ENCODE measurements at regions of chr3 and their contacts with region 1.

Region 1: DNA sequence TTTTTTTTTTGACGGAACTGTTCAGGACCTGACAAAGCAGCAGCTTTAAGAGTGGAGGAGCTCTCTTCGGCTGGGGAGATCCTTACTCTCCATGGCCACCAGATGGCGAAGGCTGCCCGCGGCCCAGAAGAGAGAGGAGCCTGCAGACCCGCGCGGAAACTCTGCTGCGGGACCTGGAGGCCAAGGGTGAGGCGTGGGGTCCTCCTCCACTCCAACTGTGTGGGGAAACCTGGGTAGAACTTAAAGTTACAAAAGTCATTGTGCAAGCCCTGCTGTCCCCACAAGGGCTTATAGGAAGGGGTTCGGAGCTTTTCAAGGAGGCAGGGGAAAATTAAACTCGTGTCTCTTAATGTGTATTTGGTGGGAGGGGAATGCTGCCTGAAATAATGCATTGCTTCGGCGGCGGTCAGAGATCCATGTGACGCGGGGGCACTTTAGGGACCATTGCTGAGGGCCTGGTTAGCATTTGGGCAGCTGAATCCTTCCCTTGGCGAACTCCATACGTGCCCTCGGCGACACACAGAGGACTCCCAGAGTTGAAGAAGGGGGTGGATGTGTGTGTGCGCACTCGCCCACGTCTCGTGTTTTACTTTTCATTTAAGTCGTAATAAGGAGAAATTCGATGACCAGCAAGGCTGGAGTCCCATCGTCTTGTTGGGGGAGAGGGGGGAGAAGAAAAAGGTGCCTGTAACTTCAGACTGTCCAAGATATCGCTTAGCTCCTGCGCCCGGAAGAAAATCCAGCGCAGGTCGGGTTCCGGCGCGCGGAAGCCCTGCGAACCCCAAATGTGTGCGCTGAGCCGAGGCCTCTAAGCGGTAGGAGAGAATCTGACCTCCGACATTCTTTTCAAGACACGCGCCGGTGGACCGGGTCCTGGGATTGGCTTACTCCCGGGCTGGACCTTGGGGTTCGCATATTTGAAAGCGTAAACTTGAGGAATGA is 9.7 kb downstream of the EOMES start:
- DNase-seq: peak; percentile 87
- ATAC-seq: peak; percentile 93
- H3K4me3 Mint-ChIP-seq: peak overlapping the region; percentile 88
- H3K27ac Mint-ChIP-seq: peak overlapping the region; percentile 70
- H3K4me1 Mint-ChIP-seq: peaks cover 27% of the 10 kb centered on the region
- H3K27me3 Mint-ChIP-seq: peaks cover 46% of the 10 kb centered on the region

Region 2: DNA sequence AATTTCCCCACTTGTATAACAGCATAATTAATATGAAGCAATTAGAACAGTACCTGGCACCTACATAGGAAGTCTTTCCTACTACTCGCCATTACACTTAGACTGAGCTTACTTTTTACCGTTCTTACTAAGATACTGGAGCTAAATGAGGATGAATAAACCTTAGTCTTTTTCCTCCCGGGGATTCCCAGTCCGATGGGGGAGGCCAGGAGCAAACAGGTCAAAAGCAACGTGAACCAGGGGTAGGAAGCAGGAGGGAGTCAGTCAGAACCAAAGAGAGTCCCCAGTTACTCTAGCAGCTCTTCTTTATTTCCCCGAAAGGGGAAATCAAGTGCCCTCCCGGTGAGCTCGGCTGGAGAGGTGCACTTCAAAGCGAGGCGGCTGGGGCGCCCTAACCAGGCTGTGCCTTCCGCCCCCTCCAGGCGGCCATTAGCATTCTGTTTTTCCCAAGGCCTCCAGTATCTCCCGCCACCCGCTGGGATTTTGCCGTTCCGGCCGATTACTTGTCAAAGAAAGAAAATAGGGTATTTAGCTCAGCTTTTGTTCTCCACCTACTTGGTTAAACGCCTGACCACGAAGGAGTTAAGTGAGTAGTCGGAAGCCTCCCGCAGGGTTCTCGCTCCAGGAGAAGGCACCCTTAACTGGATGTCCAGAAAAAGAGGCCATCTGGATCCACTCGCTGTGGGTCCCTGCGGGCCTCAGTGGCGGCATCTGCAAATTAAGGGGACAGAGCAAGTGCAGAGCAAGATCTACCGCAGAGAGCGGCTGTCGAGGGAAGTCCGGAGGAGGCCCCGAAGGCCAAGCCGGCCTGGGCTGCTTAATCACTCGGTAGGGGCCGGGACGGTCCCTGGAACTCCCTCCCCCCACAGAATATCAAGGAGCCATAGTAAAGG is 16.0 kb after region 1 on chr3:
- CTCF ChIA-PET with region 1: interaction called, 57 read pairs
- POLR2A ChIA-PET with region 1: no interaction called
- DNase-seq: peak; percentile 44
- ATAC-seq: peak; percentile 59
- H3K4me3 Mint-ChIP-seq: peak overlapping the region; percentile 58
- H3K27ac Mint-ChIP-seq: no peak overlapping the region
- H3K4me1 Mint-ChIP-seq: peaks cover 45% of the 10 kb centered on the region
- H3K27me3 Mint-ChIP-seq: peaks cover 87% of the 10 kb centered on the region

Region 3: GRCh38 chr3:28317438-28318022 is 605.1 kb after region 1 on chr3:
- CTCF ChIA-PET with region 1: interaction called, 21 read pairs
- POLR2A ChIA-PET with region 1: no interaction called
- DNase-seq: peak; percentile 62
- ATAC-seq: peak; percentile 87
- H3K4me3 Mint-ChIP-seq: no peak overlapping the region
- H3K27ac Mint-ChIP-seq: no peak overlapping the region
- H3K4me1 Mint-ChIP-seq: peaks cover 14% of the 10 kb centered on the region
- H3K27me3 Mint-ChIP-seq: no peaks in the 10 kb centered on the region

Region 4: GRCh38 chr3:28334552-28334951 is 622.1 kb after region 1 on chr3:
- CTCF ChIA-PET with region 1: interaction called, 66 read pairs
- POLR2A ChIA-PET with region 1: no interaction called
- DNase-seq: no peak
- ATAC-seq: no peak
- H3K4me3 Mint-ChIP-seq: no peak overlapping the region
- H3K27ac Mint-ChIP-seq: no peak overlapping the region
- H3K4me1 Mint-ChIP-seq: peaks cover 14% of the 10 kb centered on the region
- H3K27me3 Mint-ChIP-seq: no peaks in the 10 kb centered on the region

Region 5: DNA sequence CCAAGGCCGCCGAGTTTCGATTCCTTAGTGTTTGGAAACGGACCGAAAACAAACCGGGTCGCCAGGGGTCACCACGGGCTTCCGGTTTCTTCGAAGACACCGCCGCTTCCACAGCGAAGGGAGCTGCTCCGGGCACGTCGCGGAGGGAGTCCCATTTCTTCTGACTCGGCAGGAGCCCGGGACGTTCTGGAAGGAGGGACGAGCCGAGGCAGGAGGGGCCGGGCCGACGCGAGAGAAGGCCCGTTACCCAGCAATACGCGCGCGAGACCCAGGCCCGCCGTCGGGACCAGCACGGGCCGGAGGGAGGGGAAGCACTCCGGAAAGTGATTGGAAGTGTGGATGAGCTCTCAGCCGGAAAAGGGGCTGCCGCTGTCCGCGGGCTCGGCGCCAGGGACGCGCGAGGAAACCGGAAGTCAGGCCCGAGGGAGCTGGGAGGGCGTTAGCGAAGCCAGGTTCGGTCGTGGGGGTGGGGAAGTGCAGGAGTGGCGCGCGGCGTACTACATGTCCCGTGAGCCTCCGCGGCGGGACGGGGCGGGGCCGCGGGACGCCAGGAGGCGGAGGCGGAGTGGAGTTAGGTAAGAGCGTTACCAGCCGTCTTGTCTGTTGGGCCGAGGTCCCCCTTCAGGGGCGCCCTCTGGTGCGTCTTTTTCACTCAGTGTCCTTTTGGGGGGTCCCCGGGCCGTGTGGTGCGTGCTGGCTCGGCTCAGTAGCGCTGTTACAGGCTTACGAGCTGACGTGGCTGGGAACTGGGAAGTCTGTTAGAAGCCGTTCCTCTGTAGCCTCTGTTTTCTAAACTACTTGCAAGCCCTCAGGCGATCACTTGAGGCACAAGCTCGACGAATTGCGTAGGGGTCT is 636.4 kb after region 1 on chr3 and contains the starts of genes AZI2 and ZCWPW2:
- CTCF ChIA-PET with region 1: interaction called, 14 read pairs
- POLR2A ChIA-PET with region 1: interaction called, 12 read pairs
- DNase-seq: peak; percentile 95
- ATAC-seq: peak; percentile 87
- H3K4me3 Mint-ChIP-seq: peak within 1 kb of the TSS; percentile 97
- H3K27ac Mint-ChIP-seq: peak within 1 kb of the TSS; percentile 97
- H3K4me1 Mint-ChIP-seq: peaks cover 43% of the 10 kb centered on the region
- H3K27me3 Mint-ChIP-seq: no peaks in the 10 kb centered on the region
- total RNA-seq, gene AZI2: 52.0 to 55.3 TPM
- total RNA-seq, gene ZCWPW2: 0.31 to 0.42 TPM

Measured in activated CD8-positive, alpha-beta T cell treated with anti-CD3 and anti-CD28 coated beads, Interleukin-2, amount 10 ng/mL, durations not matched to agents 7 days and 5 days (primary cell).